Vagina (tissue), 2 donors: ENCODE measurements at regions of chr19 and their contacts with region 1.

Region 1: GRCh38 chr19:13833330-13834243 is 38.3 kb downstream of the ZSWIM4 start:
- DNase-seq: peak in 1 of 2 donors; percentile 93
- H3K4me3 ChIP-seq: peak overlapping the region; percentile 18
- H3K27ac ChIP-seq: peak overlapping the region; percentile 84
- H3K4me1 ChIP-seq: peaks cover 58% of the 10 kb centered on the region
- H3K27me3 ChIP-seq: no peaks in the 10 kb centered on the region
- CTCF ChIP-seq: peak; percentile 10 to 55 (median 14)
- POLR2A ChIP-seq: no peak

Region 2: DNA sequence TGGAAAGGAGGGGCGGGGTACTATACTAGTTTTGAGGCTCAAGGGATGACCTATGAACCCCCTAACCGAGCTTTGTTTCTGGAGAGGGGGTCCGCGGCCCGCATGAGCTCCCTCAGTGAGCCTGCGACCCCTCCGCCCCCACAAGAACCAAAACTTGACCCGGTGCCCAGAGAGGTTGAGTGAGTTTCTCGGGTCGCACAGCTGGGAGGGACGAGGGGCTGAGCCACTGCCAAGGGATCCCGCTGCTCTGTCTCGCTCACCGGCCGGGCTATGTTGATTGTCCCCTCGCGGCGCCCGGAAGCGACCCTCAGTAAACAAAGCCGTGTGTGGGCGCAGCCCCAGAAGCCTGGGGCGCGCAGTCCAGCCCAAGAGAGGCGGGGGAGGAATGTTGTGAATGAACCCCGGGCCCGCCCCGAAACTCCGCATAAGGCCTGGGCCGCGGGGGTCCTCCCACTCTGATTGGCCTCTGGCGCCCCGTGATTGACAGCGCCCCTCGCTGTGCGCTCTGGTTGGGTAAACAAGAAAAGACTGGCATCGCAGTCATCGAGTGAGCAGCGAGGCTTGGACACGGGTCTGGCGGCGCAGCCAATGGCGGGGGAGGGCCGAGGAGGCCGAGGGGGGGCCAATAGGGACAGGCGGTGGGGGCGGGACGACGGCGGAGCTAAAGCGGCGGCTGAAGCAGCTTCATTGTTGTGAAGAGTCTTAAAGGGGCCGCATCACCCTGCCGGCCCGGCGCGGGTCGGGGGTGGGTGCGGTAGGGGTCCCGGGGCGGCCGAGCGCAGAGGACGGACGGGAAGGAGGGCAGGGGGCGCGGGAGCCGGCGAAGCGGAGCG is 38.6 kb before region 1 on chr19 and contains the start of gene ZSWIM4:
- intact Hi-C with region 1: loop called (anchors 5 kb)
- DNase-seq: peak; percentile 98 to 99
- H3K4me3 ChIP-seq: peak within 1 kb of the TSS; percentile 65 to 94
- H3K27ac ChIP-seq: peak within 1 kb of the TSS; percentile 94
- H3K4me1 ChIP-seq: peaks cover 35% of the 10 kb centered on the region
- H3K27me3 ChIP-seq: no peaks in the 10 kb centered on the region
- CTCF ChIP-seq: no peak
- POLR2A ChIP-seq: peak in 1 of 2 donors; percentile 52
- total RNA-seq, gene ZSWIM4: 13.0 TPM

Region 3: GRCh38 chr19:13986348-13986904 is 152.8 kb after region 1 on chr19:
- intact Hi-C with region 1: no loop called
- DNase-seq: no peak
- H3K4me3 ChIP-seq: peak overlapping the region in 1 of 2 donors; percentile 25
- H3K27ac ChIP-seq: peak overlapping the region; percentile 60
- H3K4me1 ChIP-seq: peaks cover 8% of the 10 kb centered on the region
- H3K27me3 ChIP-seq: no peaks in the 10 kb centered on the region
- CTCF ChIP-seq: no peak
- POLR2A ChIP-seq: no peak